CD4-positive, alpha-beta T cell (primary cell): ENCODE measurements at regions of chr20 and their contacts with region 1.

Region 1: DNA sequence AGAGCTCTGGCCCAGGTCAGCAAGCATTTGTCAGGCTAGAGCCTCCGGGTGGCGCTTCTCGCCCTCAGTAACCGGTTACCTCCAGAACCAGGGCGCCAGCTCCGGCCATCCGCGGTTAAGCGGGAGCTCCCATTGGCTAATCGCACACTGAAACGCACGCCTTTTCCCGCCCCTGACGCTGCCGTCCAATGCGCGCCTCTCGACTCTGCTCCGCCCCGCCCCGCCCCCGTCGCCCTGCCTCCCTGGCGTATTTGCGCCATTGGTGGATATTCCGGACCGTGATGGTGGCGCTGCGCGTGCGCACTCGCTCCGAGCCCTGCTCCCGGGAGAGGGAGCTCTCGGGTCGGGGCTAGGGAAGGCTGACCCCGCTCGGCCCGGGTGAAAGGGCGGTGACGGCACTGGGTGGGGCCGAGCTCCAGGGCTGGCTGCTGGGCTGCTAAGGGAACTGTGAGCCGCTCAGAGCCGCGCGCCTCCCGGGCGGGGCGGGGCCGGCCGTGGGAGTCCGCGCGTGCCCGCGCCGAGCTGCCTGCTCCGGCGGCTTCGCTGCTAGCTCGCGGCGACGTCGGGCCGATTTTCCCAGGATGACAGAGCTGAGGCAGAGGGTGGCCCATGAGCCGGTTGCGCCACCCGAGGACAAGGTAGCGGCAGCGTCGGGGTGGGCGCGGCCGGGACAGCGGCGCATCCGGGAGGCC is at the start of gene CDS2:
- DNase-seq: peak; percentile 99 to 100 (median 100)
- ATAC-seq: peak; percentile 82
- H3K4me3 ChIP-seq: peak within 1 kb of the TSS; percentile 76
- H3K4me3 Mint-ChIP-seq: peak within 1 kb of the TSS; percentile 95
- H3K27ac ChIP-seq: peak within 1 kb of the TSS; percentile 95 to 98
- H3K27ac Mint-ChIP-seq: peak within 1 kb of the TSS; percentile 97
- H3K4me1 ChIP-seq: peaks cover 22% of the 10 kb centered on the region
- H3K4me1 Mint-ChIP-seq: peaks cover 38% of the 10 kb centered on the region
- H3K27me3 ChIP-seq: no peaks in the 10 kb centered on the region
- H3K27me3 Mint-ChIP-seq: no peaks in the 10 kb centered on the region
- CTCF ChIP-seq: peak; percentile 64
- total RNA-seq, gene CDS2: 62.4 to 65.0 TPM

Region 2: GRCh38 chr20:4638826-4639225 is 487.8 kb before region 1 on chr20:
- CTCF ChIA-PET with region 1: no interaction called
- POLR2A ChIA-PET with region 1: no interaction called
- intact Hi-C with region 1: no loop called
- DNase-seq: no peak
- ATAC-seq: no peak
- H3K4me3 ChIP-seq: no peak overlapping the region
- H3K4me3 Mint-ChIP-seq: no peak overlapping the region
- H3K27ac ChIP-seq: no peak overlapping the region
- H3K27ac Mint-ChIP-seq: no peak overlapping the region
- H3K4me1 ChIP-seq: peaks cover 4% of the 10 kb centered on the region
- H3K4me1 Mint-ChIP-seq: no peaks in the 10 kb centered on the region
- H3K27me3 ChIP-seq: no peaks in the 10 kb centered on the region
- H3K27me3 Mint-ChIP-seq: peaks cover 7% of the 10 kb centered on the region
- CTCF ChIP-seq: no peak

Region 3: GRCh38 chr20:4813863-4814695 is 312.6 kb before region 1 on chr20:
- CTCF ChIA-PET with region 1: no interaction called
- POLR2A ChIA-PET with region 1: interaction called, 15 read pairs
- intact Hi-C with region 1: no loop called
- DNase-seq: peak; percentile 42 to 95 (median 60)
- ATAC-seq: peak; percentile 72
- H3K4me3 ChIP-seq: peak overlapping the region; percentile 65
- H3K4me3 Mint-ChIP-seq: peak overlapping the region; percentile 89
- H3K27ac ChIP-seq: peak overlapping the region; percentile 97 to 99
- H3K27ac Mint-ChIP-seq: peak overlapping the region; percentile 98
- H3K4me1 ChIP-seq: peaks cover 76% of the 10 kb centered on the region
- H3K4me1 Mint-ChIP-seq: peaks cover 72% of the 10 kb centered on the region
- H3K27me3 ChIP-seq: no peaks in the 10 kb centered on the region
- H3K27me3 Mint-ChIP-seq: no peaks in the 10 kb centered on the region
- CTCF ChIP-seq: no peak

Region 4: DNA sequence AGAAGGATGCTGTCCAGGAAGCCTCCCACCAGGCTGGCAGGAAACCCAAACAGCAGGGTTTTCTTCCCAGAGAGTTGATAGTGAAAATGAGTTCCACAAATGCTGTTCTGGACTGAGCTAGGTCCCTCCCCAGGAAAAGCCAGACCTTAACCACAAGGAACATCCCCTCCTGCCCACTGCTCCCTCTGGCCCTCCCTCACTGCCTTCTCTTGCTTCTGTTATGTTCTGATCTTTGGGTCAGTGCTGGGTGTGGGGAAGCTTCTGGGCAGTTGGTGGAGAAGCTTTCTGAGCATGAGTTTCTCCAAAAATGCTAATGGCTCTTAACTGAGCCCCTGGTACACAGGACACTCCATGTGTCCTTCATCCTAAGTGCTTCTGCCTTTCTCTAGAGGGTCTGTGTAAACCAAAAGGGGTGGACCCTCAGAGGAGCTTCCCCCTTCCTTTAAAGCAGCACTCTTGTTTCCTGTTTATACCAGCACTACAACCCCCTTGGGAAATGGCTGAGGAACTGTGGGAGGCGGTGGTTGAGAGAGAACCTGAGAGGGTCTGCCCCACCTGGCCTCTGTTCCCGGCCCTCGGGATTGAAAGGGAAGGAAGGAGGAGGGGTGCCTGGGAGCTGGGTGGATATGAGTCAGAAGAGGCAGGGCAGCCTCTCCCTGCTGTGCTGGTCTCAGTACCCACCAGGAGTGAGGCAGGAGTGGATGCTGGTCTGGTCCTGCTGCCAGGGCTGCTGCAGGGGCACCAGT is 42.2 kb after region 1 on chr20:
- CTCF ChIA-PET with region 1: interaction called, 5 read pairs
- POLR2A ChIA-PET with region 1: interaction called, 11 read pairs
- intact Hi-C with region 1: no loop called
- DNase-seq: no peak
- ATAC-seq: no peak
- H3K4me3 ChIP-seq: no peak overlapping the region
- H3K4me3 Mint-ChIP-seq: peak overlapping the region; percentile 70
- H3K27ac ChIP-seq: peak overlapping the region in 1 of 2 donors; percentile 1
- H3K27ac Mint-ChIP-seq: peak overlapping the region; percentile 84
- H3K4me1 ChIP-seq: peaks cover 41% of the 10 kb centered on the region
- H3K4me1 Mint-ChIP-seq: peaks cover 78% of the 10 kb centered on the region
- H3K27me3 ChIP-seq: no peaks in the 10 kb centered on the region
- H3K27me3 Mint-ChIP-seq: no peaks in the 10 kb centered on the region
- CTCF ChIP-seq: no peak

Region 5: GRCh38 chr20:5191829-5192569 is 65.3 kb after region 1 on chr20:
- CTCF ChIA-PET with region 1: interaction called, 38 read pairs
- POLR2A ChIA-PET with region 1: interaction called, 46 read pairs
- intact Hi-C with region 1: loop called (anchors 1 kb)
- DNase-seq: peak in 10 of 14 experiments; percentile 5 to 79 (median 16)
- ATAC-seq: peak; percentile 78
- H3K4me3 ChIP-seq: no peak overlapping the region
- H3K4me3 Mint-ChIP-seq: no peak overlapping the region
- H3K27ac ChIP-seq: no peak overlapping the region
- H3K27ac Mint-ChIP-seq: peak overlapping the region; percentile 54
- H3K4me1 ChIP-seq: peaks cover 4% of the 10 kb centered on the region
- H3K4me1 Mint-ChIP-seq: peaks cover 6% of the 10 kb centered on the region
- H3K27me3 ChIP-seq: no peaks in the 10 kb centered on the region
- H3K27me3 Mint-ChIP-seq: no peaks in the 10 kb centered on the region
- CTCF ChIP-seq: peak; percentile 73

Region 6: GRCh38 chr20:5448449-5449118 is 321.9 kb after region 1 on chr20:
- CTCF ChIA-PET with region 1: no interaction called
- POLR2A ChIA-PET with region 1: no interaction called
- intact Hi-C with region 1: loop called in 1 of 2 experiments (anchors 5 kb)
- DNase-seq: peak in 12 of 14 experiments; percentile 8 to 55 (median 26)
- ATAC-seq: no peak
- H3K4me3 ChIP-seq: no peak overlapping the region
- H3K4me3 Mint-ChIP-seq: no peak overlapping the region
- H3K27ac ChIP-seq: no peak overlapping the region
- H3K27ac Mint-ChIP-seq: no peak overlapping the region
- H3K4me1 ChIP-seq: no peaks in the 10 kb centered on the region
- H3K4me1 Mint-ChIP-seq: no peaks in the 10 kb centered on the region
- H3K27me3 ChIP-seq: peaks cover 0 to 21% of the 10 kb centered on the region in 2 experiments
- H3K27me3 Mint-ChIP-seq: peaks cover 38% of the 10 kb centered on the region
- CTCF ChIP-seq: peak; percentile 65